ENCODE measurements at regions of chr4 and their contacts with region 1.

Region 1: DNA sequence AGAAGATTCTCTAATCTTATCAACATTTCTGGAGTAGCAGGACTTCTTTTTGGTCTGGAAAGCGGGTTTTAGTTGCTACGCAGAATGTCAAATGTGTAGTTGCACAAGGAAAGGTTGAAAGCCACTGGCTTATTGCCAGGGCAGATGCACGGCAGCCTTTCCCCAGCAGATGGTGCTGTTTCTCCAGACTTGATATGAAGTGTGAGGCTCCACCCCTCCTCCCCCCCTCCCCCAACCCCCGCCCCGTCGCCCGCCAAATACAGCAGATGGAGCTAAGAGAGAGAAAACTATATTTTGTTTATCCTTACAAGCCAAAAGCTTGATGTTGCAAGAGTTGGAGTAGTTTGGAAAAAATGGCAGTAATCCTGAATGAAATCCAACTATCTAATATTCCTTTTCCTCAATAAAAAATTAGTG is 32.0 kb downstream of the ENOPH1 start:
- DNase-seq: peak; percentile 93

Region 2: DNA sequence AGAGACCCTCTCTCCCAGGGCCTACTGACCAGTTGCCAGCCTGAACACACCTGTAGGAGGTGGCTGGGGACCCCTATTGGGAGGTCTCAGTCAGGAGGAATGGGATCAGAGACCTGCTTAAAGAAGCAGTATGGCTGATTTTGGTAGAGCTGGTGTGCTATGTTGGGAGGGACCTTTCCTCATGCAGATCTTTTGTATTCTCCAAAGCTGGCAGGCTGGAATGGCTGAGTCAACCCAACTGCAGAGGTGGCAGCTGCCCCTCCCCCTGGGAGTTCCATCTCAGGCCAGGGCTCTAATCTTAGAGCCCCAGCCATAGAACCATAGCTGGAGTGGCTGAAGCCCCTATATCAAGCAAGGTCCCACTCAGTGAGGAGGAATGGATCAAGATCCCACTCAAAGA is 1711.2 kb before region 1 on chr4:
- intact Hi-C with region 1: no loop called
- DNase-seq: no peak

Region 3: DNA sequence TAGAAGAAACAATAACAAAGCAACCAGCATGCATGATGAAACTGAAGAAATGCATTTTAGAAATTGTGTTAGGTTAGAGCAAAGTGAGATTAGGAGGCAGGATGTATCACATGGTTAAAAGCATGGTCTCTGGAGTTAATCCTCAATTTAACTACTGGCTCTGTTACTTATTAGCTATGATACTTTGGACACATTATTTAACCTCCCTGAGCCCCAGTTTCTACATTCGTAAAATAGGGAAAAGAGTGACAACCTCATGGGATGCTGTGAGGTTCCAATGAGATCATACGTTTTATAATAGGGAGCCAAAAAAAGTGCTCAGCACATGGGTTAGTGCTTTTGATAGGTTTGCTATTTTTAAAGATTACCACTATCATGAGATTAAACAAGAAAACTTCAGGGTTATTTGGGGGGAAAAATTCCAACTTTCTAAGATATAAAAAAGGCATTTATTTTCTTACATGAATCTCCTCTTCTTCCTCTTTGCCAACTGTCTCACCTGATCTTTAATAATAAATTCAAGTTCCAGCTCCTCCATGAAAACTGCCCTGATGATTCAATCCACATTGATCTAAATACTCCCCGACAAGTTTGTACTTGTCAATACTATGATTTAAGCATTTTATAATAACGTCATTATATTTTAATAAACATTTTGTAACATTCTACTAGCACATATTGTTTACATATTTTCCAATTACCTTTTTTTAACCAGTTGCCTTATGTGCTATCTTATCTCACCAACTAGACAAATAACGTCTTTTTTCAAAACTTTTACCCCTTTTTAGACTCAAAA is 423.9 kb after region 1 on chr4:
- intact Hi-C with region 1: loop called in 1 of 2 experiments (anchors 10 kb)
- DNase-seq: no peak

Region 4: GRCh38 chr4:83267121-83267829 is 804.9 kb after region 1 on chr4:
- intact Hi-C with region 1: loop called in 1 of 2 experiments (anchors 5 kb)
- DNase-seq: peak; percentile 91

Measured in posterior vena cava (tissue), 2 donors.